Ovary (tissue), 10 donors: ENCODE measurements at regions of chr5 and their contacts with region 1.

Region 1: DNA sequence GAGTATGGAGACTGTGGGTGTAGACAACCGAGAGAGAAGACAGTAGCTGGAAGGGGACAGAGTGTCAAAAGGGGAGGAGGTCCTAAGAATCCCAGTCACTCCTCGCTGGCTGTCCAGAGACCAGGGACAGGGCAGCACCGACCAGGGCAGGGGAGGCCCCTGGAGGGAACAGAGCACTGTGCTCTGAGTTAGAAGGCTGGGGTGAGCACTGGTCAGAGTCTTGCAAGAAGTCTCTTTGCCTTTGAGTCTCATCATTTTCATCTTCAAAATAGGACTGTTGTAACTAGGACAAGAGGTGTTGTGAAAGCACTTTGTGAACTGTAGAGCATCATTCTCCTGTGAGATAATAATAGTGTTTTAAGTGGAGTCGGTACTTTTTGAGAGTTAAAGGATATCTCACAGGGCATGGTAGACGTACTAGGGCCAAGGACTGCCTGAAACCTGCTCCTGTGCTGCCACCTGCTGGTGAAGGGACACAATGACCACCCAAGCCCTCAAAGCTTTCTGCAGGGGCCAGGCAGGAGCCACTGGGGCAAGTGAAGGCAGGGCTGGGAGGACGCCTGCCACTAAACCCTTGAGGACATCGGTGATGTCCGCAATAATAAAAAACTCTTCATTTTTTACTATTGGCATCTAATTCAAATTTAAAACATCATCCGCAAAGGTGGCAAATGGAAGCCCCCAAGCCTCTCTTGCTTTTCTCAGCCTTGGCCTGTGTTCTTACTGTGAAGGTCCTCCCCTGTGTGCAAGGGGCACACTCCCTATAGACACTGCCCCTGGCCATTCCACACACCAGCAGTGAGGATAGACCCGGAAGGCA is 28.2 kb downstream of the SLC6A7 start:
- DNase-seq: peak; percentile 78 to 90 (median 88)
- H3K4me3 ChIP-seq: no peak overlapping the region
- H3K27ac ChIP-seq: no peak overlapping the region
- H3K4me1 ChIP-seq: peaks cover 2% of the 10 kb centered on the region
- H3K27me3 ChIP-seq: no peaks in the 10 kb centered on the region
- CTCF ChIP-seq: peak; percentile 64 to 96 (median 95)
- EP300 ChIP-seq: no peak
- POLR2A ChIP-seq: no peak

Region 2: GRCh38 chr5:149834246-149834855 is 383.7 kb before region 1 on chr5:
- intact Hi-C with region 1: loop called in 1 of 4 experiments (anchors 10 kb)
- DNase-seq: peak in 4 of 5 donors; percentile 49 to 70 (median 56)
- H3K4me3 ChIP-seq: no peak overlapping the region
- H3K27ac ChIP-seq: no peak overlapping the region
- H3K4me1 ChIP-seq: no peaks in the 10 kb centered on the region
- H3K27me3 ChIP-seq: no peaks in the 10 kb centered on the region
- CTCF ChIP-seq: peak in 2 of 3 donors; percentile 17 to 65
- EP300 ChIP-seq: no peak
- POLR2A ChIP-seq: no peak

Region 3: DNA sequence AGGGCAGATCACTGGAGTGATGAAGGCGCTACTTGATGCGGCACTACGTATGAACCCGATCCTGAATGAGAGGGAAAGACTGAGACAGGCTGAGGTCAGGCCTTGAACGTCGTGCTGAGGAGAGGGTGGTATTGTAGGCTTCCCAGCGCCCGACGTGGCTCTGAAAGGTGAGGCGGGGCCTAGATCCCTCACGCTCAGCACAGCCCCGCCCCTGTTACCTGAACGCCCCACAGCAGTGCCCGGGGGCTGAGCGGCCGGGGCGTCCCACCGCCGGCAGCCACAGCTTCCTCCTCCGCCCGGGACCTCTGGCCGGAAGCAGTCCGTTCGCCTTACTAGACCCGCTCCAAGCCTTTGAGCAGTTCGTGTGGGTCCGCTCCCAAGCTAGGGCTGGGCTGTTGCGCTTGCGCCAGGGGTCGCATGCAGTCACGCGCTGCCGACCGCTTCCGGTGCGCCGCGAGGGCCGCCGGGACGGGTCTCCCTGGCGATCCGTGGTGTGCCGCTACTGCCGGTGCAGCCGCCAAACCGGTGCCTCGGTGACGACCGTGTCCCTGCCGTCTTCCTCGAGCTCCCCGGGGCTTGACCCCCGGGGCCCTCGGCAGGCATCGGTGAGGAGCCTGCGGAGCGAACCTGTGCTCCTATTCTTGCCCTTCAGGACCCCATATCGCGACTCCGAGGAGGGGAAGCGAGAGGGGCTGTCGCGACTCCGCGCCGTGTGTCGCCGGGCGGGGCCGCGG is 217.7 kb before region 1 on chr5 and contains the starts of genes HMGXB3 and TIGD6:
- intact Hi-C with region 1: loop called in 1 of 4 experiments (anchors 10 kb)
- DNase-seq: peak; percentile 91 to 96 (median 92)
- H3K4me3 ChIP-seq: peak within 1 kb of the TSS; percentile 99
- H3K27ac ChIP-seq: peak within 1 kb of the TSS; percentile 81 to 86
- H3K4me1 ChIP-seq: peaks cover 4% of the 10 kb centered on the region
- H3K27me3 ChIP-seq: no peaks in the 10 kb centered on the region
- CTCF ChIP-seq: peak in 1 of 3 donors; percentile 15
- EP300 ChIP-seq: no peak
- POLR2A ChIP-seq: peak; percentile 67
- total RNA-seq, gene HMGXB3: 24.3 to 32.1 (median 28.1) TPM
- total RNA-seq, gene TIGD6: 2.0 to 6.1 (median 5.5) TPM

Region 4: DNA sequence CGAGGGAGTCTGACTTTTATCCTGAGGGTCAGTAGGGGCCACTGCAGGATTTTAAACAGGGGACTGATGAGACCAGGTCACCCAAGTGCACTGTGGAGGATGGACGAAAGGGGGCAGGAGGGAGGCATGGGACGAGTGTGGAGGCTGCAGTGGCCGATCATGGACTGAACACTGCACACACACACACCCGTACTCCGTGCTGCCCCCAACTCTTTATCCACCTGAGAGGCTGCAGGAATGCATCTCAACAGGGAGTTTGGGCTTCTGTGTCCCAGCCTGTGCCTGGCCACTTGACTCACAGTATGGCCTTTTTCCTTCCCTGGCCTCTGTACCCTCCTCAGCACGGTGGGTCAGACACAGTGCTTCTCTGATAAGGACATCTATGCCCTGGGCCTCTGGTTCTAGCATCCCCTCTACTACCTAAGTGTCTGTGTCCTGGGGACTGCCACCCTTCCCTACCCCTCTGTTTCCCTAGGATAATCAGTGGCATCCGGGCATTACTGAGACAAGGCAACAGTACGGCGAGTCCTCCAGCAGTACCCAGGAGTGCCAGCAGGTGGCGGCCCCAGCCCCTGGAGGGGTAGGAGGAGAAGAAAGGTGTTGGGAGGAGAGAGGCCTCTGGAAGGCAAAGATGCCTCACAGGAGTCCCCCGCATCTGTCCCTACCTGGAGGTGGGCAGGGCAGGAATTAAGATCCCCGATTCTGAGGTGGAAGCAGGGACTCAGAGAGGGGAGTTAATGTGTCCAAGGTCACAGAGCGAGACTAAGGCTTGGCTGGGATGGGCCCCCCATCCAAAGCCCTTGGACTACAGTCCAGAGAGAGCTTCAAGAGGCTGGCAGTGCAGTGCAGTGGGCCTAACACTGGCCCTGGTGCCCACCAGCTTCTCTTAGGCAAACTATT is 56.6 kb before region 1 on chr5:
- intact Hi-C with region 1: loop called in 2 of 4 experiments (anchors 5 kb)
- DNase-seq: peak; percentile 69 to 88 (median 85)
- H3K4me3 ChIP-seq: no peak overlapping the region
- H3K27ac ChIP-seq: peak overlapping the region; percentile 24 to 32
- H3K4me1 ChIP-seq: peaks cover 36% of the 10 kb centered on the region
- H3K27me3 ChIP-seq: no peaks in the 10 kb centered on the region
- CTCF ChIP-seq: peak; percentile 61 to 85 (median 67)
- EP300 ChIP-seq: no peak
- POLR2A ChIP-seq: no peak